GM18951 (cell line): ENCODE measurements at regions of chr18 and their contacts with region 1.

Region 1: GRCh38 chr18:44679056-44679905 is 1.4 kb upstream of the SETBP1 start:
- POLR2A ChIP-seq: peak; percentile 53

Region 2: DNA sequence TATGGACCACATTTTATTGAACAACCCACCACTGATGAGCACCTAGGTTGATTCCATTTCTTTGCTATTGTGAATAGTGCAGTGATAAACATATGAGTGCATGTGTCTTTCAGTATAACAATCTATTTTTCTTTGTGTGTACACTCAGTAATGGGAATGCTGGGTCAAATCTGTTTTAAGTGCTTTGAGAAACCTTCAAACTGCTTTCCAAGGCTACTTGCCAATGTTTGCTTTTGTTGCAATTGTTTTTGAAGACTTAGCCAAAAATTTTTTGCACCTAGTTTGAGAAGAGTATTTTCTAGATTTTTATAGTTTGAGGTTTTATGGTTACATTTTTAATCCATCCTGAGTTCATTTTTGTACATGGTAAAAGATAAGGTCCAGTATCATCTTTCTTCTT is 586.0 kb before region 1 on chr18:
- in situ Hi-C with region 1: no loop called
- POLR2A ChIP-seq: no peak

Region 3: GRCh38 chr18:44758861-44759631 is 79.8 kb after region 1 on chr18:
- in situ Hi-C with region 1: no loop called
- POLR2A ChIP-seq: no peak

Region 4: GRCh38 chr18:45212181-45213039 is 533.1 kb after region 1 on chr18:
- in situ Hi-C with region 1: loop called (anchors 25 kb)
- POLR2A ChIP-seq: no peak